ENCODE measurements at regions of chr2 and their contacts with region 1.

Region 1: GRCh38 chr2:201363857-201364560 is 6.9 kb upstream of the FLACC1 start:
- DNase-seq: no peak
- ATAC-seq: peak; percentile 80

Region 2: DNA sequence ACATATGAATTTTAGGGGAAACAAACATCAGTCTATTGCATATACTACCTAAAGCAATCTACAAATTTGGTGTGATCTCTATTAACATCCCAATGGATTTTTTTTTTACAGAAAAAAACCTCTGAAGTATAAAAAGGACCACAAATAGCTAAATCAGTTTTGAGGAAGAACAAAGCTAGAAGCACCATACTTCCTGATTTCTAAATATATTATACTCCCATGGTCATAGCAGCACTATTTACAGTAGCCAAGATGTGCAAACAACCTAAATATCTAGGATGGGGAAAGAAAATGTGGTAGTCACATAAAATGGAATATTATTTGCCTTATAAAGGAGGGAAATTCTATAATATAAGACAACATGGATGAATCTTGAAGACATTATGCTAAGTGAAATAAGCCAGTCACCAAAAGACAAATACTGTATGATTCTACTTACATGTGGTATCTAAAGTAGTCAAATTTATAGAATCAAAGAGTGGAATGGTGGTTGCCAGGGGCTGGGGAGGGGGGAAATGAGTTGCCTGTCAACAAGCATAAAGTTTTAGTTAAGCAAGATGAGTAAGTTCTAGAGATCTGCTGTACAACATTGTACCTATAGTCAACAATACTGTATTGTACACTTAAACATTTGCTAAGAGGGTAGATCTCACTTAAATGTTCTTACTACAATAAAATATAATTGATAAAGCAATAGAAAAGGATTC is 121.3 kb before region 1 on chr2:
- intact Hi-C with region 1: loop called in 1 of 2 experiments (anchors 5 kb)
- DNase-seq: no peak
- ATAC-seq: no peak

Region 3: DNA sequence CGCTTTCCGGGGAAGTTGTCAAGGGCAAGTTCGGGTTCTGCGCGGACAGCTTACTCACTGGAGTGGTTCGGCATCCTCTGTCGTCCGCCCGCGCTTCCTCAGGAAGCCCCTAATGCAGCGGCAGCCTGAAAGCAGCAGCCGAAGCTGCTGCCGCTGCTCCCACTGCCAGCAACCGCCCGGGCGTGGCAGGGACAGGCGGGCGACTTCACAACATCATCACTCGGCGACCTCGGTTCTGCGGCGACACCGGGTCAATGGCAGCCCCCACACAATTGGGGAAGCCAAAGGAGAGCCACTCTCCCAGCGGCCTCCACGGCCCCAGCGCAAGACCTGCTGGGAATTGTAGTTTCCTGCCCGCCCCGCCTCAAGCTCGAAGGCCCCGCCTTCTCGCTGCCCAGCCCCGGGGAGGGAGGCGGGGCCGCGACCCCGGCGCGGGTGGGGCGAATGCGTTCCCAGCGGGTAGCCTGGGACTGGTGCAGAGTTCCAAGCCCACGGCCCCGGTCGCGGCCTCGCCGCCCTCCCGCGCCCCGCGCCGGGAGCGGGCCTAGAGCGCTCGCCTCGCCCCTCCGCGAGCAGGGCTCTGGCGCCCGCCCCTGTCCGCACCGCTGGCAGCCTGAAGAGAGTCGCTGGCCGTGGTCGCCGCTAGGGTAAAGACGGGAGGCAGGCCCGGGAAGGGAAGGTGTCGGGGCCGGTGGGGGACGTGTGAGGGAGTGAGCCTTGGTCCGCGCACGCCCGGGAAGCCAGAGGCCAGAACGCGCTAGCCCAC is 87.5 kb after region 1 on chr2 and contains the starts of genes STRADB and TRAK2:
- intact Hi-C with region 1: no loop called
- DNase-seq: peak; percentile 94 to 97
- ATAC-seq: peak; percentile 84
- total RNA-seq, gene STRADB: 47.5 to 75.9 TPM
- total RNA-seq, gene TRAK2: 55.7 to 73.7 TPM

Measured in left colon (tissue), 2 donors.